Natural killer cell (primary cell): ENCODE measurements at regions of chr1 and their contacts with region 1.

Region 1: DNA sequence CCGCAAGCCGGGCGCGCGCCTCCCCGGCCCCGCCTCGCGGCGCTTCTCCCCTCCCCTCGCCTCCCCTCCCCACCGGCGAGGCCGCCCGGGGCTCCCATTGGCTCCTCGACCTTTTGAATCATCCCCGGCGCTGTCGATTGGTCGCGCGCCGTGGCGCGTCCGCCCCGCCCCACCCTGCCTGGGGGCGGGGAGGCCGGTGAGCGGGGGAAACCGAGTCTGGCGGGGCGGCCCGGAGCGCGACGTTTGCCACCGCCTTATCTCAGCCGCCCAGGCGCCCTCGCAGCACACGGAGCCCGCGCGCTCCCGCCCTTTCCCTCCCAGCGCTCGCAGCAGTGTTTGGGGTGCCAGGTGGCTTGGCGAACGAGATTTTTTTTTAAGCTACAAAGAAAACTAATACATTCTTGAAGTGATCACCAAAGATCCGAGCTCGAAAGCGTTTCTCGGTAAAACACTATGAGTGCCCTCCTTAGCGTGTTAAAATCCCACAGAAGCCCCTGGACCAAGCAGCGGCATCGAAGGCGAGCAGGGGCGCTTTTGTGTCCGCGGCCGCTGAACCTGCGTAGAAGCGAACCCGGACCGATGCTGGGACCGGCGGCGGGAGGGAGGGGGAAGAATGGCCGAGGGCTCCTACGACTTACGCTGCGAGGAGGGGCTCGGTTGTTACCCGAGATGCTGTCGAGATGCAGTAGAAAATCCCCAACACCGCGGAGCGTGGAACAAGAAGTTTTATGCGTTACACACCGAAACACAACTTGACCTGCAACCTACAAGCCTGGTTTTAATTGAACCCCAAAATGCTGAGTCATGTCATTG is 436 bp upstream of the LBR start:
- DNase-seq: peak; percentile 87 to 95
- ATAC-seq: peak; percentile 88 to 96 (median 92)
- H3K4me3 ChIP-seq: peak overlapping the region; percentile 76
- H3K4me3 Mint-ChIP-seq: peak overlapping the region; percentile 89
- H3K27ac ChIP-seq: peak overlapping the region; percentile 91
- H3K27ac Mint-ChIP-seq: peak overlapping the region; percentile 88 to 90
- H3K4me1 ChIP-seq: peaks cover 36% of the 10 kb centered on the region
- H3K4me1 Mint-ChIP-seq: peaks cover 45 to 48% of the 10 kb centered on the region in 2 donors
- H3K27me3 ChIP-seq: no peaks in the 10 kb centered on the region
- H3K27me3 Mint-ChIP-seq: no peaks in the 10 kb centered on the region
- CTCF ChIP-seq: no peak

Region 2: DNA sequence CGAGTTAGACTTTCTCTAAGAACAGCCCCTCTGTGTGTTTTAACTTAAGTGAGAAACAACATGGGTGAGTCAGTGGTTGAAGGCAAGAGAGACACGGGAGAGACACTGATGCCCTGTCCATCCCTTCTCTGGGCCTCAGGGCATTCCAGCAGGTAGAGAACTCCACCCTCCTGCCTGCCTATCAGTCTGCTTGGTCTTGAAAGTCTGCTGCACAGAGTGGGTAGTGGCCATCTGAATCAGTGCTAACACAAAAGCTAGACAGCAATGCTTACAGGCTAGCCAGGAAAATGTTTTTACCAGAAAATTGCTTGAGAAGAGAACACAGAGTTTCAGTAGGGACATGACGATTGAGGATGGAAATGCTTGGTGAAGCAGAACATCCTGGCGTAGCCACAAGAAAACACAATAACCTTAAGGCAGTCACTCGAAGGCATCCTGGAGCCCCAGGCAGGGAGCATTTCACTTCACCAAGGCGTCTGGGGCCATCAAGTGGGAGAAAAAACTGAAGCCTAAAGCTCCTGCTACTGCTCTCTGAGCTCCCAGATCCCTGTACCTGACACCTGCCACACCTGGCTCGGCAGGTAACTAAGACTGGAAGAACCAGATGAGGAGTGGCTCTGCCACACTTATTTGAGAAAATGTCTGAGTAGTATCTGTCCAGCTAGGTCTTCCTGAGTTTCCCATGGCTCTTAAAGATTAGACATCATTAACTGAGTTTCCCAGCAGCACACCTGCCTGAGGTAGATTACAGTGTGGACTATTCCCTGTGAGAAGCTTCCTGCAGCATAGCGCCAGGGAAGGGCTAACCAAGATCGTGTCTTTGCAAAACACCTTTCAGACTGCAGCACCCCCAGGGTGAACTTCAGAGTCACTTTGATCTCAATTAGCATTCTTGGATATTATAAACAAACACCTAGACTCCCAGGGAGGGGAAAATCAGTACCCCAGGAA is 17.6 kb after region 1 on chr1:
- intact Hi-C with region 1: loop called (anchors 1 kb)
- DNase-seq: peak in 1 of 2 donors; percentile 32
- ATAC-seq: peak in 1 of 3 donors; percentile 21
- H3K4me3 ChIP-seq: peak overlapping the region; percentile 14
- H3K4me3 Mint-ChIP-seq: peak overlapping the region; percentile 81
- H3K27ac ChIP-seq: peak overlapping the region; percentile 67
- H3K27ac Mint-ChIP-seq: peak overlapping the region; percentile 91 to 97
- H3K4me1 ChIP-seq: peaks cover 53% of the 10 kb centered on the region
- H3K4me1 Mint-ChIP-seq: peaks cover 63 to 85% of the 10 kb centered on the region in 2 donors
- H3K27me3 ChIP-seq: no peaks in the 10 kb centered on the region
- H3K27me3 Mint-ChIP-seq: no peaks in the 10 kb centered on the region
- CTCF ChIP-seq: no peak

Region 3: GRCh38 chr1:225454733-225455132 is 26.5 kb after region 1 on chr1:
- intact Hi-C with region 1: loop called (anchors 2 kb)
- DNase-seq: peak; percentile 64 to 74
- ATAC-seq: peak; percentile 89 to 98 (median 97)
- H3K4me3 ChIP-seq: no peak overlapping the region
- H3K4me3 Mint-ChIP-seq: peak overlapping the region; percentile 91
- H3K27ac ChIP-seq: peak overlapping the region; percentile 79
- H3K27ac Mint-ChIP-seq: peak overlapping the region; percentile 88 to 98
- H3K4me1 ChIP-seq: peaks cover 47% of the 10 kb centered on the region
- H3K4me1 Mint-ChIP-seq: peaks cover 59 to 69% of the 10 kb centered on the region in 2 donors
- H3K27me3 ChIP-seq: no peaks in the 10 kb centered on the region
- H3K27me3 Mint-ChIP-seq: no peaks in the 10 kb centered on the region
- CTCF ChIP-seq: no peak

Region 4: GRCh38 chr1:225526878-225527277 is 98.6 kb after region 1 on chr1:
- intact Hi-C with region 1: no loop called
- DNase-seq: no peak
- ATAC-seq: no peak
- H3K4me3 ChIP-seq: no peak overlapping the region
- H3K4me3 Mint-ChIP-seq: no peak overlapping the region
- H3K27ac ChIP-seq: no peak overlapping the region
- H3K27ac Mint-ChIP-seq: no peak overlapping the region
- H3K4me1 ChIP-seq: no peaks in the 10 kb centered on the region
- H3K4me1 Mint-ChIP-seq: no peaks in the 10 kb centered on the region
- H3K27me3 ChIP-seq: no peaks in the 10 kb centered on the region
- H3K27me3 Mint-ChIP-seq: peaks cover 8 to 23% of the 10 kb centered on the region in 2 donors
- CTCF ChIP-seq: no peak

Region 5: DNA sequence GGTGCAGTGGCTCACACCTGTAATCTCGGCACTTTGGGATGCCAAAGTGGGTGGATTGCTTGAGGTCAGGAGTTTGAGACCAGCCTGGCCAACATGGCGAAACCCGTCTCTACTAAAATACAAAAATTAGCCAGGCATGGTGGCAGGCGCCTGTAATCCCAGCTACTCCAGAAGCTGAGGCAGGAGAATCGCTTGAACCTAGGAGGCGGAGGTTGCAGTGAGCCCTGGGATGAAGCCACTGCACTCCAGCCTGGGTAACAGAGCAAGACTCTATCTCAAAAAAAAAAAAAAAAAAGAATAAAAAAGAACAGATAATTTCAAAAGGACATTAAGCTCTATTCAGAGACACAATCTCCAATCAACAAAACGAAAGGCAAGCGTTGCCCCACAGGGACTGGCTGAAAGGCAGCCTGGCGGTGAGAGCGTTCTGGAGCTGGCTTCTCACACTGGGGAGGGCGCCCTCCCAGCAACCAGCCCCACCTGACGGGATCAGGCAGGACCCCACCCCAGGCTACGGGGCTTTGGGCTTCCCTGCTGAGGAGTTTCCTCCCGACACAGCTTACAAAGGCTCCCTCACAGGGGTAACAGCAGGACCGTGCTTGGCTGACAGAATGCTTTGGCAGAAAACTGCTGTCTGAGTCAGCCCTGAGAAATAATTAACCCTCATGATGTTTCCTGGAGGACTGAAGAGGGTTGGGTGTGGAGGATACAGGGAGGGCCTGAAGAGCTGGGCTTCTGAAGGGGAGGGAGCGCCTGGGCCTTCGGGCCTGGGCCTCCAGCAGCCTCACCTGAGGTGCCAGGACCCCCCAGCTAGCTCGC is 318.3 kb after region 1 on chr1:
- intact Hi-C with region 1: no loop called
- DNase-seq: no peak
- ATAC-seq: no peak
- H3K4me3 ChIP-seq: no peak overlapping the region
- H3K4me3 Mint-ChIP-seq: no peak overlapping the region
- H3K27ac ChIP-seq: no peak overlapping the region
- H3K27ac Mint-ChIP-seq: no peak overlapping the region
- H3K4me1 ChIP-seq: peaks cover 14% of the 10 kb centered on the region
- H3K4me1 Mint-ChIP-seq: peaks cover 5% of the 10 kb centered on the region in 2 donors
- H3K27me3 ChIP-seq: no peaks in the 10 kb centered on the region
- H3K27me3 Mint-ChIP-seq: peaks cover 0 to 3% of the 10 kb centered on the region in 2 donors
- CTCF ChIP-seq: no peak